Posterior cingulate gyrus (tissue), 11 donors: ENCODE measurements at regions of chr17 and their contacts with region 1.

Region 1: DNA sequence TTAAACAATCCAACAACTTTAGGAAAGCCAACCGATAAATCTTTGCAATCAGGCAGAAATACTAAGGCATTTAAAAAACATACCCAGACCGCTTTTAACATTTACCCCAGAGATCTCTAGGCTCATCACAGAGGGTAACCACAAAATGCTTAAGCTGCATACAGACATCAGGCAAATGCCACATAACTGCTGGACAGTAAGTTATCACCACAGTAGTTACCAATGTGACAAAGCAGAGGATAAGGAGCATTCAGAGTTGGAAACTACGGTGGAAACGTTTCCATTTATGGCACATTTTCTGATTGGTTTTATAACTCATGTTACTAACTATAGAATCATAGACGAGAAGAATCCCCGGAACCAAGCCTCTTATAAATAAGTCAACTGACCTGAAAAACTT is 77.5 kb downstream of the KANSL1 start:
- DNase-seq: no peak

Region 2: DNA sequence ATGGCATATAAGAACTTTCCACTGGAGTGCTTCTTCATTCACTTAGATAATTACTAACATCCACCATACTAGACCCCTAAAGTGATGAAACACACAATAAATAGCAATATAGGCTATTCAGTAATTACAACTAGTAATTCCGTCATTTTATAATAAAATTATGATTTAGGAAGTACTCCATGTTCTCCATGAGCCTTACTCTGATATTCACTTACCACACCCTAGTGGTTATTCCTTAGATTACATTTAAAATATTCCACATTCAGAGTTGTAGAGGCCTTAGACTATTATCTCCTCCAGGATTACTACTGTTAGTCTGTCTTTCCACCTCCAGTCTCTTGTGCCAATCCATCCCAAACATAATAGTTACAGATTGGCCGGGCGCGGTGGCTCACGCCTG is 54.3 kb before region 1 on chr17:
- intact Hi-C with region 1: no loop called
- DNase-seq: no peak

Region 3: DNA sequence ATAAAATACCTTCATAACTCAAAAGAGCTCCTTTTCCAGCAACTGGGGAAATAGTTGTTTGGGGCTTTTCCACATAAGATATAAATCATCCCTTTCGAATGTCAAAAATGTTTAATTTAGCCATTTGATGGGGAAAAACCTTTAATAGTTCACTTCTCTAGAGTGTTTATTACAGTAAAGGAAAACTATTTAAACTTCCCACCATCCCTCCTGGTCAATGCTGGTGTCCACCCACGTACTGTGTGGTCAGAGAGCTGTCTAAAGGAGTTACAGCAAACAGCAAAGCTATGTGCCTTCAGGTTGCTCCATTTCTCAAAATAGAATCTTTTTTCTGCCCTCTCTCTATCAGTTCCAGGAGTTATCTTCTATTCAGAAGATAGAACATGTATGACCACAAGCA is 44.0 kb after region 1 on chr17:
- intact Hi-C with region 1: loop called (anchors 10 kb)
- DNase-seq: no peak